ENCODE measurements at regions of chr3 and their contacts with region 1.

Region 1: DNA sequence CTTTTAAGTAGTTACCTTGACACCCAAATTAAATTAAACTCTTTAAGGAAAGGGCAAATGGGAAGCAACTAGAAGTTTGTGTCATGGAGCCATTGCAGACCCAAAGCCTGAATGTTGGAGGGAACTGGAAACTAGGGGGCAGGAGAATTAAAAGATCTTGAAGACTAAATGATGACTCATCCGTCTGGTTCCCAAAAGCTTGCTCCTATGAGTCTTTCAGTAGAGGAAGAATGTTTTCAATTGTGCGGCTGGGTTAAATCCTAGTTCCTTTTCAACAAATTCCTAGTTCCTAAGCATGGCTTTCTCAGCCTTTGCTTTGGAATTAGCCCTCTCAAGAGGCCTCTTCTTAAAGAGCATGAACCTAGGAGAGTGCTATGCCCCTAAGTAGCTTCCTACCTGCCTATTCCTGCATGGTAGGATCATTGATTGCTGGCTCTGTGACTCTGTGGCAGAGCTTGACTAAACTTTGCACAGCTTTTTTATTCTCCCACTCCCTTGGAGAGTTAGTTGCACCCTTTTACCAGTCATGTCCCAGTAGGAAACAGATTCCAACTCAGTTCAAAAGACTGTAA is 17.7 kb downstream of the CLEC3B start:
- DNase-seq: no peak
- ATAC-seq: no peak
- H3K4me3 Mint-ChIP-seq: no peak overlapping the region
- H3K27ac Mint-ChIP-seq: no peak overlapping the region
- H3K4me1 Mint-ChIP-seq: peaks cover 31% of the 10 kb centered on the region
- H3K27me3 Mint-ChIP-seq: peaks cover 30% of the 10 kb centered on the region

Region 2: GRCh38 chr3:45055411-45056143 is 11.8 kb after region 1 on chr3:
- CTCF ChIA-PET with region 1: interaction called, 76 read pairs
- POLR2A ChIA-PET with region 1: no interaction called
- DNase-seq: peak; percentile 49
- ATAC-seq: no peak
- H3K4me3 Mint-ChIP-seq: no peak overlapping the region
- H3K27ac Mint-ChIP-seq: no peak overlapping the region
- H3K4me1 Mint-ChIP-seq: peaks cover 19% of the 10 kb centered on the region
- H3K27me3 Mint-ChIP-seq: peaks cover 18% of the 10 kb centered on the region

Region 3: GRCh38 chr3:45167011-45167911 is 123.4 kb after region 1 on chr3:
- CTCF ChIA-PET with region 1: interaction called, 12 read pairs
- POLR2A ChIA-PET with region 1: no interaction called
- DNase-seq: peak; percentile 90
- ATAC-seq: peak; percentile 99
- H3K4me3 Mint-ChIP-seq: peak overlapping the region; percentile 52
- H3K27ac Mint-ChIP-seq: peak overlapping the region; percentile 91
- H3K4me1 Mint-ChIP-seq: peaks cover 46% of the 10 kb centered on the region
- H3K27me3 Mint-ChIP-seq: peaks cover 14% of the 10 kb centered on the region

Region 4: GRCh38 chr3:45224824-45225464 is 181.1 kb after region 1 on chr3:
- CTCF ChIA-PET with region 1: interaction called, 16 read pairs
- POLR2A ChIA-PET with region 1: no interaction called
- DNase-seq: peak; percentile 45
- ATAC-seq: peak; percentile 6
- H3K4me3 Mint-ChIP-seq: peak overlapping the region; percentile 68
- H3K27ac Mint-ChIP-seq: peak overlapping the region; percentile 69
- H3K4me1 Mint-ChIP-seq: peaks cover 11% of the 10 kb centered on the region
- H3K27me3 Mint-ChIP-seq: peaks cover 72% of the 10 kb centered on the region

Region 5: DNA sequence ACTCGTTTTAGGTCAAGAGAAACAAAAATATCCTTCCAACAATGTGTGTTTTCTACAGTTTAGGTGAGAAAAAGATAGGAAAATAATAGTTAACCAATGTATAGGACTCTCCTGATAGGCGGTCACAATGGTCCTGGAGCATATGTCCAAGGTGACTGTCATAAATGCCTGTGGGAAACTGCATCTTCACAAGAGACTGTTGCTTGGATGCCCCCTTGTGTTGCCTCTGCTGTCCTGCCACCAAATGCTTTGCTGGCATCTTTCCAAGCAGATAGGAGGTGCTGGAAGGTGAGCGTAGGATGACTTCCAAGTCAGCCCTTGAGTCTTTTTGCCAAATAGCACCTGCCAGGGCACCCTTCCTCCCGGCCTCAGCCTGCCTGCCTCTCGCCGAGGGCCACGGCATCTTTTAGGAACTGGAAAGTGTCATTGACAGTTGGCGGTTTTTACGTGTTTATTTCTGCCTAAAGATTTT is 621.3 kb after region 1 on chr3:
- CTCF ChIA-PET with region 1: interaction called, 28 read pairs
- POLR2A ChIA-PET with region 1: no interaction called
- DNase-seq: peak; percentile 75
- ATAC-seq: peak; percentile 52
- H3K4me3 Mint-ChIP-seq: peak overlapping the region; percentile 81
- H3K27ac Mint-ChIP-seq: peak overlapping the region; percentile 86
- H3K4me1 Mint-ChIP-seq: peaks cover 47% of the 10 kb centered on the region
- H3K27me3 Mint-ChIP-seq: no peaks in the 10 kb centered on the region